ENCODE measurements at regions of chr19 and their contacts with region 1.

Region 1: DNA sequence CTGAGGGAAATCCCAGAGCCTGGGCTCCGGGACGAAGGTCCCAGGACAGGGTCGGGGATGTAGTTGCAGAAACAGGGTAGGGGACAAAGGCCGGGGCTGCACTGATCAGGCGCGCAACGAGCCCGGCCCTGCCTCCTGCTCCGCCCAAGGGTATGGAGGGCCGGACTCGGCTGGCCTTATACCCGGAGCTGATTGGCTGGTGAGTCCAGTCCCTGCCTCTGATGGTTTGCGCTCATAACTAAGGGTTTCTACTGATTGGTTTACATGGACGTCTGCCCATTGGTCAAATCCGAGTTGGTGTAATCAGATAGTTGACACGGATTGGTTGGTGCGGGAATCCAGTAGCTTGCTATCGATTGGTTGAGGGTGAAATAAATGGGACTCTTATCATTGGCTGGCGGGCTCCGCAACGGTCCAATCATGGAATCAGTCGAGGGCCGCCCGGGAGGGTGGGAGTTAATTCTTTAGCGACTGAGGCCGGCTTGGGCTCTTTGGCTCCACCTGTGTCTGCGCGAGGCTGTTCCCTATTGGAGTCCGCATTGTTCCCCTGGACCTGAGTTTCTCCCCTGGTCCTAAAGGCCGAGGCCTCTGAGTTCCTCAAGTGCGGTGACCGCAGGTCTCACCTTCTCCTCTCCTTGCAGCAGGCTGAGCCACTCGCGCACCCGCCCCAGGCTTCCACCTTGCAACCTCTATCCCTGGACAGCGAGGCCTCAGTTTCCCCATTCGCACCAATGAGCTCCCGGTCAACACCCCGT is 570 bp upstream of the MPND start:
- DNase-seq: peak; percentile 93 to 99
- ATAC-seq: peak; percentile 94 to 98 (median 96)
- H3K4me3 ChIP-seq: peak overlapping the region; percentile 36 to 89 (median 74)
- H3K27ac ChIP-seq: peak overlapping the region; percentile 79 to 98 (median 94)
- H3K4me1 ChIP-seq: peaks cover 3 to 29% (median 25%) of the 10 kb centered on the region in 9 donors
- H3K27me3 ChIP-seq: no peaks in the 10 kb centered on the region
- CTCF ChIP-seq: peak in 6 of 9 donors; percentile 17 to 51 (median 43)

Region 2: GRCh38 chr19:4217429-4218264 is 125.1 kb before region 1 on chr19:
- intact Hi-C with region 1: no loop called
- DNase-seq: no peak
- ATAC-seq: peak in 1 of 8 donors; percentile 18
- H3K4me3 ChIP-seq: no peak overlapping the region
- H3K27ac ChIP-seq: no peak overlapping the region
- H3K4me1 ChIP-seq: no peaks in the 10 kb centered on the region
- H3K27me3 ChIP-seq: peaks cover 0 to 2% (median 0%) of the 10 kb centered on the region in 7 donors
- CTCF ChIP-seq: no peak

Region 3: DNA sequence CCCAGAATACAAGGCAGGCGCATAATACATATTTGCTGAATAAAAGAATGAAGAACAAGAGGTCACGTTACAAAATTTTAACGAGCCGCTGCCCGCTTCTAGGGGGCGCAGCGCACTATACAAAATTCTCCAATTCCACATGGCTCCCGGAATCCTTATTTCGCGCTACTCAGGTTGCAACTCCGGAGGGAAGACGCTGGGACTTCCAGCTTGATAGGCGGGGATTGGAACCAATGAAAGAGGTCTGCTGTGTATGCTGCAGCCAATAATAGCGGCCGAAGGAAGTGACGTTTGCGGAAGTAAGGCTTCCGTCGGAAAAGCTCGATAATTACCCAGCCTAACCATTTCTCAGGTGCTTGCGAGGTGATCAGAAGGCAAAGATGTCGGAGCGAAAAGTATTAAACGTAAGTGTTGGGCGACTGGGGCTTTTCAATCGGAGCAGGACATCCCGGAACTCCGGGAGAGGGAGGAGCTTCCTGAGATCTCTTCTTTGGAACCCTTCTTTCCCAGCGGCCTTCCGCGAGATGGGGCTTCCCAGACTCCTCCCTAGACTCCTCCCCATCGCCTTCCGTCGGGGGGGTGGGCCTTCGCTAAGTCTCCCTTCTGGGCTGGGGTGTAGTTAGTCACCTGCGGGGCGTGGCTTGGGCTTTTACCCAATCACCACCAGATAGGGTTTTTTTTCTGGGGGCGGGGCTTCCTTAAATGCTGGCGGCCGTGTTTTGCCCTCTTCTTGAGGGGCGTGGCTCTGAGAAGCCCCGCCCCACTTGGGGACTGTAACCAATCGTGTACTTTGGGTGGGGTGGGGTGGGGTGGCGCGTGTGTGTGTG is 95.8 kb before region 1 on chr19 and contains the start of gene YJU2:
- intact Hi-C with region 1: loop called in 1 of 10 experiments (anchors 2 kb)
- DNase-seq: peak; percentile 98 to 99
- ATAC-seq: peak; percentile 98 to 99 (median 99)
- H3K4me3 ChIP-seq: peak within 1 kb of the TSS; percentile 52 to 78 (median 64)
- H3K27ac ChIP-seq: peak within 1 kb of the TSS; percentile 78 to 99 (median 94)
- H3K4me1 ChIP-seq: peaks cover 0 to 14% (median 11%) of the 10 kb centered on the region in 9 donors
- H3K27me3 ChIP-seq: no peaks in the 10 kb centered on the region
- CTCF ChIP-seq: peak in 7 of 9 donors; percentile 20 to 65 (median 54)
- total RNA-seq, gene YJU2: 7.9 to 11.9 (median 10.4) TPM

Region 4: GRCh38 chr19:4272894-4273293 is 69.9 kb before region 1 on chr19:
- intact Hi-C with region 1: loop called in 1 of 10 experiments (anchors 5 kb)
- DNase-seq: no peak
- ATAC-seq: no peak
- H3K4me3 ChIP-seq: no peak overlapping the region
- H3K27ac ChIP-seq: no peak overlapping the region
- H3K4me1 ChIP-seq: peaks cover 0 to 5% (median 0%) of the 10 kb centered on the region in 9 donors
- H3K27me3 ChIP-seq: peaks cover 0 to 9% (median 3%) of the 10 kb centered on the region in 7 donors
- CTCF ChIP-seq: no peak

Measured in heart right ventricle (tissue), 16 donors.